Mammary epithelial cell (primary cell): ENCODE measurements at regions of chr1 and their contacts with region 1.

Region 1: GRCh38 chr1:38297842-38298241 is 251.2 kb upstream of the POU3F1 start:
- DNase-seq: no peak
- H3K4me3 ChIP-seq: no peak overlapping the region
- H3K27ac ChIP-seq: no peak overlapping the region
- H3K4me1 ChIP-seq: no peaks in the 10 kb centered on the region
- H3K27me3 ChIP-seq: no peaks in the 10 kb centered on the region
- CTCF ChIP-seq: no peak

Region 2: DNA sequence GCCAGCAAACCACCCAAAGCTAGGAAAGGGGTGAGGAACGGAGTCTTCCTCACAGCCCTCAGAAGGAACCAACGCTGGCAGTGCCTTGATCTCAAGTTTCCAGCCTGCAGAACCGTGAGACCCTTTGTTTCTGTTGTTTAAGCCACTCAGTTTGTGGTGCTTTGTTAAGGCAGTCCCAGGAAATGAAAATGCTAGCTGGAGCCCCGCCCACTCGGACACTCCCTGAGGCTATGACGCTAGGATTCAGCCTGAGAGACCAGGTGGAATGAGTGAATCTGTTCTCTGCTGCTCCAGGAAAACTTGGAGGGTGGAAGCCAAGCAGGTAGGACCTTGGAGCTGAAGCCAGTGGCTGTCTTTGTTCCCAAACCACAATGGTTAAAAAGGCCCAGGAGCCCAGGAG is 54.7 kb before region 1 on chr1:
- CTCF ChIA-PET with region 1: no interaction called
- dilution Hi-C with region 1: loop called (anchors 5 kb)
- in situ Hi-C with region 1: no loop called
- intact Hi-C with region 1: no loop called
- DNase-seq: peak; percentile 32
- H3K4me3 ChIP-seq: no peak overlapping the region
- H3K27ac ChIP-seq: no peak overlapping the region
- H3K4me1 ChIP-seq: no peaks in the 10 kb centered on the region
- H3K27me3 ChIP-seq: no peaks in the 10 kb centered on the region
- CTCF ChIP-seq: no peak

Region 3: GRCh38 chr1:38327559-38327973 is 29.7 kb after region 1 on chr1:
- CTCF ChIA-PET with region 1: no interaction called
- dilution Hi-C with region 1: no loop called
- in situ Hi-C with region 1: no loop called
- intact Hi-C with region 1: no loop called
- DNase-seq: no peak
- H3K4me3 ChIP-seq: no peak overlapping the region
- H3K27ac ChIP-seq: no peak overlapping the region
- H3K4me1 ChIP-seq: no peaks in the 10 kb centered on the region
- H3K27me3 ChIP-seq: peaks cover 5% of the 10 kb centered on the region
- CTCF ChIP-seq: no peak

Region 4: DNA sequence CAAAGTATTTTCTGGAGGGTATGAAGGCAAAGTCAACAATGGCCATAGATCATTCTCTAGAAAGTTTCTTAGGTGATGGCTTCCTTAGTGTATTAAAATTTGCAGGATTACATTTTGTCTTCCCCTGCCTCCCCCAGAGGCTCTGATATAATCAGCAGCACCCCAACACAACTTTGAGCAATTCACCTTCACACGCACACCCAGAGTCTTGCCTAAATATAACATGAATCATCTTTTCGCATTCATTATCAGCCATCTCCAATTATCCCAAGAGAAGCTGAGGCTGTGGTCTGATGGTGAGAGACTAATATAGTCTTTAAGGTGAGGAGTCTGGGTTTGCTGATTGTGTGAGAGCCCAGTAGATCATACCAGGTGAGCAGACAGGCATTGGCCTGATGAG is 218.7 kb after region 1 on chr1:
- CTCF ChIA-PET with region 1: no interaction called
- dilution Hi-C with region 1: no loop called
- in situ Hi-C with region 1: no loop called
- intact Hi-C with region 1: no loop called
- DNase-seq: no peak
- H3K4me3 ChIP-seq: no peak overlapping the region
- H3K27ac ChIP-seq: no peak overlapping the region
- H3K4me1 ChIP-seq: no peaks in the 10 kb centered on the region
- H3K27me3 ChIP-seq: no peaks in the 10 kb centered on the region
- CTCF ChIP-seq: no peak

Region 5: DNA sequence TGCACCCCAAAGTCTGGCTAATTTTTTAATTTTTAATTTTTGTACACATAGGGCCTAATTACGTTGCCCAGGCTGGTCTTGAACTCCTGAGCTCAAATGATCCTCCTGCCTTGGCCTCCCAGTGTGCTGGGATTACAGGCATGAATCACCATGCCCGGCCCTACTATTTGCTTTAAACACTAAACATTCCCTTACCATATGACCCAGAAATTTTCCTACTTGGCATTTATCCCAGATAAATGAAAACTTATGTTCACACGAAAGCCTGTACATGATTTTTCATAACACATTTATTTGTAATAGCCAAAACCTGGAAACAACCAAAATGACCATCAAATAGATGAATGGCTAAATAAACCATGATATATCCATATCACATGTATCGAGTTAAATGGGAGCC is 764.1 kb after region 1 on chr1:
- CTCF ChIA-PET with region 1: no interaction called
- dilution Hi-C with region 1: no loop called
- in situ Hi-C with region 1: no loop called
- intact Hi-C with region 1: no loop called
- DNase-seq: no peak
- H3K4me3 ChIP-seq: no peak overlapping the region
- H3K27ac ChIP-seq: no peak overlapping the region
- H3K4me1 ChIP-seq: no peaks in the 10 kb centered on the region
- H3K27me3 ChIP-seq: no peaks in the 10 kb centered on the region
- CTCF ChIP-seq: no peak